A673 (cell line): ENCODE measurements at regions of chr6 and their contacts with region 1.

Region 1: DNA sequence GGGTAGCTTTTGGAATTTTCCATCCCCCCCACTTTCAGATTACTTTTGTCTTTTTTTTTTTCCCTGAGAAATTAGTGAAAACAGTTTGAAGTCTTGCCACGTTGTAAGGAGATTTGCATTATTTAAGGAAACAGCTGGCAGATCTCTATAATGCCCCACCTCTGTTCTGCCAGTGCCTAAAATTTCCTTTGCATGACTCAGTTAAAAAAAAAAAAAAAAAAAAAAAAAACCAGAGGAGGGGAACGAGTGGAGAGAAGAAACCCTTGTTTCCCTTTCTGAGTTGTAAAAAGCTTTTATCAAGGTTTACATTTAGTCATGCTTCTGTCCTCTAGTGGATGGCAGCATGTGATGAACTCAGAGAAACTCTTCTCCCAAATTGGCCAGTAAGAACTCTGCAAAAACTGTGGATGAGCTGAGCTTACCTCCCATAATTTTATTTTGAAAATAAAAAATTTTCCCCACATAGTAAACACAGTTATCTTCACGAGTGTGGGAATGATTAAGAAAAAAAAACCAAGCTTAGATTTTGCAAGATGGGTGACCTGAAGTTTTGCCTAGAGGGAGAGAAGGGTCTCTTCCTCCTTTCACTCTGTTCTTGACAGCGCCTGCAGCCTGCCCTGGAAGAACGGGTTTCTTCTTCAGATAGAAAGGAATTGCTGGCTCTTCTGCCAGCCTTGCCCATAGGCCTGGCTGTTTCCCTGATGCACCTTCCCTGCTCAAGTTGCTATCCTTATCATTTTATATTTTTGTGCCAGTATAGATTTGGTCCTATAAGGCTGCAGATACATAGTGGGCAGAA is 33.7 kb downstream of the CARMIL1 start:
- DNase-seq: peak; percentile 93
- H3K4me3 ChIP-seq: peak overlapping the region; percentile 14
- H3K27ac ChIP-seq: peak overlapping the region; percentile 44
- H3K4me1 ChIP-seq: peaks cover 41% of the 10 kb centered on the region
- H3K27me3 ChIP-seq: no peaks in the 10 kb centered on the region
- CTCF ChIP-seq: peak; percentile 35; the same call in 1 of the 2 replicates

Region 2: DNA sequence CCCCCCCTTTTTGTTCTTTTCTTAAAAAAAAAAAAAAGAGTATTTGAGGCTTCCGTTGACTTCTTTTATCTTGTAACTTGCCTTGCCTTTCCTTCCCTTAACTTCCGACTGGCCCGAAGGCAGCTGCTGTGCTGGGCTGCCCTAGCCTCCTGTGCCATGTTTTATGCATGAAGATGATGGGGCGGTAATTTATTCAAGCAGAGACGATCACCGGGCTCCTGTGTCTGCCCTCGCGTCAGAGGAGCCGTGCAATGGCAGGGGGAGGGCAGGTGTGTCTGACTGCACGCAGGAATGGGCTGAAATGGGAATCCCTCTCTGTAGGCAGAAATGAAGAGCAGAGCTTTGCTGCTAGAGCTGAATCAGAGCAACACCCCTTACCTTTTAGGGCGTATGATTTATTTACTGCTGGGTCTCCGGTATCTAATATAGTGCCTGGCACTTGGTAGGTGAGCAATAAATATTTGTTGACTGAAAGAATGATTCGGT is 270.8 kb before region 1 on chr6:
- CTCF ChIA-PET with region 1: no interaction called
- POLR2A ChIA-PET with region 1: interaction called, 15 read pairs
- intact Hi-C with region 1: no loop called
- DNase-seq: no peak
- H3K4me3 ChIP-seq: no peak overlapping the region
- H3K27ac ChIP-seq: no peak overlapping the region
- H3K4me1 ChIP-seq: peaks cover 18% of the 10 kb centered on the region
- H3K27me3 ChIP-seq: no peaks in the 10 kb centered on the region
- CTCF ChIP-seq: no peak

Region 3: GRCh38 chr6:25147223-25147622 is 165.7 kb before region 1 on chr6:
- CTCF ChIA-PET with region 1: no interaction called
- POLR2A ChIA-PET with region 1: no interaction called
- intact Hi-C with region 1: no loop called
- DNase-seq: no peak
- H3K4me3 ChIP-seq: no peak overlapping the region
- H3K27ac ChIP-seq: no peak overlapping the region
- H3K4me1 ChIP-seq: no peaks in the 10 kb centered on the region
- H3K27me3 ChIP-seq: no peaks in the 10 kb centered on the region
- CTCF ChIP-seq: no peak

Region 4: DNA sequence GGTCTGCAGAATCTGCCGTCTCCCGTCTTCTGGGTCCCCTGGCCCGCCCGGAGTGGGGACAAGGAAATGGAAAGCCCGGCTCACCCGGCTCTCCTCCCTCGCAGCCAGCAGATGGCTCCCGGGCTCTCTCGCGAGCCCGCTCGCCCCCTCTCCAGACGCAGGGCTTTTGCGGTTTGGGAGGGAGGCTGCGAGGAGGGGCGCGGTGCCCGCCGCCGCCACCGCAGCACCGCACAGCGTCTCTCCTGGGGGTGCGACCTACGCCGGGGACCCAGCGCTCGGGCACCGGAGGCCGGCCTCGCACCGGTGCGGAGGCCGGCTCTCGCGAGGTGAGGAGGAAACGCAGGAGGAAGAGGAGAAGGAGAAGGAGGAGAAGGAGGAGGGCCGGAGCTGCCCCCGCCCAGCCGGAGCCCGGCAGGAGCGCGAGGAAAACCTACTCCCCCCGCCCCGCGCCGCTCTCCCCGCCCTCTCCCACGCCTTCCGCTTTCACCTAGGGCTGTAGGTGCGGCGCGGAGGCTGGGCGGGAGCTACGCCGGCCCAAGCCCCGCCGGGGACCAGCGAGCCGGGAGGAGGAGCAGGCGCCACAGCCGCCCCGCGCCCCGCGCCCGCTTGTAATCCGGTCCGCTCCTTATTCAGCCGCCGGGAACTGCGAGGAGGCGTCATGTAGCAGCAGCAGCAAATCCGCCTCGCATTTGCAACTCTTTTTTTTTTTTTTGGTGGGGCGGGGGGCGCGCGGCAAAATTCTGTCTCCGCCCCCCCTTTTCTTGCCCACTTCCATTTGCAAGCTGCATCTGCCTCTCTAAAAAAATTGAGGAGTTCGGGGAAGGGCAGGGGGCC is 33.8 kb before region 1 on chr6 and contains the start of gene CARMIL1:
- CTCF ChIA-PET with region 1: interaction called, 12 read pairs
- POLR2A ChIA-PET with region 1: no interaction called
- intact Hi-C with region 1: no loop called
- DNase-seq: peak; percentile 91
- H3K4me3 ChIP-seq: peak within 1 kb of the TSS; percentile 85
- H3K27ac ChIP-seq: peak within 1 kb of the TSS; percentile 75
- H3K4me1 ChIP-seq: peaks cover 16% of the 10 kb centered on the region
- H3K27me3 ChIP-seq: no peaks in the 10 kb centered on the region
- CTCF ChIP-seq: peak; percentile 80
- total RNA-seq, gene CARMIL1: 7.2 and 7.9 TPM in 2 replicates

Region 5: DNA sequence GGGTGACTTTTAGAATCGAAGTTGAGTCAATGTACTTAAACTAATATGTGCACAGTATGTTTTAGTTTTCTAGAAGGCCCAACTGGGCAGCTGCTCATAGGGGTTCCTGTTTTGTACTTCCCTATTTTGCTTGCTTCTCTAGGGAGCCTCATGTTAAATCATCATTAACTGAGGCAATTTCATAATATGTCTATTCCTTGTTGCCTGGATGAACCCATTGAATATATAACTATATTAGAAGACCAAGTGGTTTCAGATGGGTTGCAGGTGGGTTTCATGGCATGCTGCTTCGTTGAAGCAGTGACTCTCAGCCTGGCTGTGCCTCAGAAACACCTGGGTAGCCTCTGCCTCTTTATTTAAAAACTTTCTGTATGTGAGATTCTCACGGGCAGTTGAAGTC is 11.5 kb before region 1 on chr6:
- CTCF ChIA-PET with region 1: interaction called, 11 read pairs
- POLR2A ChIA-PET with region 1: no interaction called
- intact Hi-C with region 1: no loop called
- DNase-seq: no peak
- H3K4me3 ChIP-seq: no peak overlapping the region
- H3K27ac ChIP-seq: no peak overlapping the region
- H3K4me1 ChIP-seq: peaks cover 8% of the 10 kb centered on the region
- H3K27me3 ChIP-seq: no peaks in the 10 kb centered on the region
- CTCF ChIP-seq: no peak